Right cardiac atrium (tissue), 5 donors: ENCODE measurements at regions of chr5 and their contacts with region 1.

Region 1: DNA sequence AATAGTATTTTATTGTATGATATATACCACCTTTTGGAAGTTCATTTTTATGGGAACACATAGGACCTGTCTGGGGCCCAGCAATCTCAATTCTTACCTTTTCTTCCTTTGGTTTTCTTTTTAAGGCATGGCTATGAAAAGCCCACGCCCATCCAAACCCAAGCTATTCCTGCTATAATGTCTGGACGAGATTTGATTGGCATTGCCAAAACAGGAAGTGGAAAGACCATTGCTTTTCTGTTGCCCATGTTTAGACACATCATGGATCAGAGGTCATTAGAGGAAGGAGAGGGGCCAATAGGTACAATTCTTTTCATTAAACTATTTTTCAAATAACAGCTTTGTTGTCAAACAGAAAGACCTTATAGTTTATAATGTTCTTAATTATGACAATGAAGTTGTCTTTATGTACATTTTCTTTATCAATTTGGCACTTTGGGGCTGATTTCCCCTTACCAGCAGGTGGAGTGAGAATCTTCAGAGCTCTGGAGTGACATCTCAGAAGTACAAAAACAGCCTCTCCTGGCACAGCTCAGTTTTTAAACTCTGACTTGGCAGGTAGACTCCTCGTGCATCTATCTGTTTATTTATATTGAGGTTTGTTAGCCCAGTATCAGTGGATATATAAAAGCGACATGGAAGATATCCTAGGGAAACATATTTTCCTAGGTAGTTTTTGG is 25.8 kb downstream of the DDX46 start:
- DNase-seq: no peak
- ATAC-seq: no peak
- H3K4me3 ChIP-seq: no peak overlapping the region
- H3K27ac ChIP-seq: no peak overlapping the region
- H3K4me1 ChIP-seq: no peaks in the 10 kb centered on the region
- H3K27me3 ChIP-seq: no peaks in the 10 kb centered on the region

Region 2: DNA sequence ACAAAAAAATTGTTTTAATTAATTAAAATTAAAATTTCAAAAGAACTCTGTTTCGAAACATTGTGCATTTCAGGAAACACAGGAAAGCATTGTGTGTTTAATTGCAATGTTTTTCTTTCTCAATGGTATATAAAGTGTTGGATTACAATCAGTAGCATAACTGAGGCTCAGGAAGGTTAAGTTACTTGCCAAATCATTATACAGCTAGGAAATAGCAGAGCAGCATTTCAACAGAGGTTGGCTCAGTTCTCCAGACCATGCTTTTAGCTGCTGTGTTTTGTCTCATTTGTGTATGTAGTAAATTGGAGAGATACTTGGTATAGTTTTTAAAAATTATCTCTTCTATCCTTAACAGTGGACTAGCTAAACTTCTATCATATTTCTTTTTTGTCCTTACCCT is 76.1 kb before region 1 on chr5:
- intact Hi-C with region 1: loop called in 1 of 4 experiments (anchors 10 kb)
- DNase-seq: no peak
- ATAC-seq: no peak
- H3K4me3 ChIP-seq: no peak overlapping the region
- H3K27ac ChIP-seq: no peak overlapping the region
- H3K4me1 ChIP-seq: no peaks in the 10 kb centered on the region
- H3K27me3 ChIP-seq: no peaks in the 10 kb centered on the region

Region 3: DNA sequence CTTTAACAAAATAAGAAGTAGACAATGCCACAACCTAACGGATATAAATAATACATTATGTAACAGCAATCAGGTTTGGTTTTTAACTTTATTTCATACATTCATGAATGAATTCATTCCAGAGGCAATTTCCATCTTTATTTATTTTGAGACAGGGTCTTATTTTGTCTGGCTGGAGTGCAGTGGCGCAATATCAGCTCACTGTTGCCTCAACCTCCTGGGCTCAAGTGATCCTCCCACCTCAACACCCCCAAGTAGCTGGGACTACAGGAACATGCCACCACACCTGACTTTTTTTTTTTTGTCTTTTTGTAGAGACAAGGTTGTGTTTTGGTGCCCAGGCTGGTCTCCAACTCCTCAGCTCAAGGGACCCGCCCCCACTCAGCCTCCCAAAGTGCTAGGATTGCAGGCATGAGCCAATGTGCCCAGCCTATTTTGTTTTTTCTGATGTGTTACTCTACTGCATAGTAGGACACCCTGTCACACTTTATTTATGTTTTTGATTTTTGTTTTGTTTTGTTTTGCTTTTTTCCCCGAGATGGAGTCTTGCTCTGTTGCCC is 35.1 kb after region 1 on chr5:
- intact Hi-C with region 1: no loop called
- DNase-seq: no peak
- ATAC-seq: no peak
- H3K4me3 ChIP-seq: no peak overlapping the region
- H3K27ac ChIP-seq: no peak overlapping the region
- H3K4me1 ChIP-seq: no peaks in the 10 kb centered on the region
- H3K27me3 ChIP-seq: no peaks in the 10 kb centered on the region